GM12878 (cell line): ENCODE measurements at regions of chr4 and their contacts with region 1.

Region 1: DNA sequence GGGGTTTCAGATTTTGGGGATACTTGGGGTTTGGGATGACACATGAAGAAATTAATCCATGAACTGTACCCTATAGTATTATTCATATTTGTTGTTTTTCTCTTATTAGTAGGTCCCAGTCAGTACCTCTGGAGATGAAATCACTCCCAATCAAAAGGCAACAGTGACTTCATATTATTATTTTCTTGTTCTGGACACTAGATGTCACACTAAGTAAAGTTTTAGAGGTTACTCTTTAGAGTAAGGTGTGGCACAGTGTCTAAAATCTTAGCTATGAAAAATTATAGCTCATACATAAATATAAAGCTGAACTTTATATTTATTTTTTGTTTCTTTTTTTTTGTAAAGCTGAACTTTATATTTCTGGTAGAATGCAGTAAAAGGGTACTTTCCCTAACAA is 35.1 kb downstream of the FAM114A1 start:
- DNase-seq: no peak
- ATAC-seq: peak; percentile 95
- H3K4me3 ChIP-seq: no peak overlapping the region
- H3K27ac ChIP-seq: no peak overlapping the region
- H3K4me1 ChIP-seq: no peaks in the 10 kb centered on the region
- H3K27me3 ChIP-seq: no peaks in the 10 kb centered on the region
- CTCF ChIP-seq: peak in 2 of 3 experiments; percentile 23 to 61; a peak in 3 of 6 replicates
- EP300 ChIP-seq: no peak
- POLR2A ChIP-seq: no peak
- RAD21 ChIP-seq: peak; percentile 79

Region 2: DNA sequence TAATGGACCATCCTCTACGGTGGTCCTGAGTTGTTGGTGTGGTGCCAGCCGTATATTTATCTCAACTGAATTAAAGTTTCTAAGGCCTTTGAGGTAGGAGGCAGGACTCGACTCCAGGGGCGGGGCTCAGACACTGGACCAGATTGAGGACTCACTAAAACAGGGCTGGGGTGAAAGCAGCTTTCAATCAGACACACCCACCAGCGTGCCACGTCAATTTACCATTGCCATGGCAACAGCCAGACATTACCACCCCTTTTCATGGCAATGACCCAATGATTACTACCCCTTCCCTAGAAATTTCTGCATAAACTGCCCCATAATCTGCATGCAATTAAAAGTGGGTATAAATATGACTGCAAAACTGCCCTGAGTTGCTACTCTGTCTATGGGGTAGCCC is 91.4 kb before region 1 on chr4:
- CTCF ChIA-PET with region 1: no interaction called
- POLR2A ChIA-PET with region 1: no interaction called
- RAD21 ChIA-PET with region 1: no interaction called
- SMC1A ChIA-PET with region 1: no interaction called
- in situ Hi-C with region 1: no loop called
- intact Hi-C with region 1: no loop called
- DNase-seq: no peak
- ATAC-seq: no peak
- H3K4me3 ChIP-seq: no peak overlapping the region
- H3K27ac ChIP-seq: no peak overlapping the region
- H3K4me1 ChIP-seq: peaks cover 11% of the 10 kb centered on the region
- H3K27me3 ChIP-seq: no peaks in the 10 kb centered on the region
- CTCF ChIP-seq: no peak
- EP300 ChIP-seq: no peak
- POLR2A ChIP-seq: no peak
- RAD21 ChIP-seq: no peak

Region 3: GRCh38 chr4:38837849-38838248 is 64.8 kb before region 1 on chr4:
- CTCF ChIA-PET with region 1: no interaction called
- POLR2A ChIA-PET with region 1: no interaction called
- RAD21 ChIA-PET with region 1: no interaction called
- SMC1A ChIA-PET with region 1: no interaction called
- in situ Hi-C with region 1: no loop called
- intact Hi-C with region 1: no loop called
- DNase-seq: no peak
- ATAC-seq: no peak
- H3K4me3 ChIP-seq: no peak overlapping the region
- H3K27ac ChIP-seq: no peak overlapping the region
- H3K4me1 ChIP-seq: no peaks in the 10 kb centered on the region
- H3K27me3 ChIP-seq: no peaks in the 10 kb centered on the region
- CTCF ChIP-seq: no peak
- EP300 ChIP-seq: no peak
- POLR2A ChIP-seq: no peak
- RAD21 ChIP-seq: no peak

Region 4: GRCh38 chr4:38856524-38857337 is 46.0 kb before region 1 on chr4 and contains the start of gene TLR6:
- CTCF ChIA-PET with region 1: interaction called, 49 read pairs
- POLR2A ChIA-PET with region 1: no interaction called
- RAD21 ChIA-PET with region 1: interaction called, 15 read pairs
- SMC1A ChIA-PET with region 1: interaction called, 12 read pairs
- in situ Hi-C with region 1: no loop called
- intact Hi-C with region 1: no loop called
- DNase-seq: peak; percentile 91
- ATAC-seq: peak; percentile 59
- H3K4me3 ChIP-seq: peak within 1 kb of the TSS; percentile 75
- H3K27ac ChIP-seq: peak within 1 kb of the TSS; percentile 96
- H3K4me1 ChIP-seq: peaks cover 14% of the 10 kb centered on the region
- H3K27me3 ChIP-seq: no peaks in the 10 kb centered on the region
- CTCF ChIP-seq: peak; percentile 62 to 79 (median 77)
- EP300 ChIP-seq: peak in 1 of 2 experiments; percentile 51; a peak in 1 of 4 replicates
- POLR2A ChIP-seq: no peak
- RAD21 ChIP-seq: peak; percentile 88
- polyA plus RNA-seq, gene TLR6: 1.1 to 1.5 TPM

Region 5: DNA sequence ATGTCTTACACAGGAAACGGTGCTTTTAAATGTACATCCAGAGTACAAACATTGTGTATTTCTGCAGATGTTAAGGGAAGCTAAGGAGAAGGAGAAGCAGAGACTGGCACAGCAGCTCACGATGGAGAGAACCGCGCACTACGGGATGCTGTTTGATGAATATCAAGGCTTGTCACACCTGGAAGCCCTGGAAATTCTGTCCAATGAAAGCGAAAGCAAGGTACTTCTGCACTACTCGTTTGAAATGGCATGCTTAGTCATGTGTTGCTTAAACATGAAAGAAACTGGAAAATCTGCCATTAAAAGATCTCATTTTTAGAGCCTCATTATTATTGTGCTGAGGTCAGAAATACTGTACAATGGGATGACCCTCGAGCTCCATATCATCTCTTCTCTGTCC is 12.2 kb after region 1 on chr4:
- CTCF ChIA-PET with region 1: interaction called, 36 read pairs
- POLR2A ChIA-PET with region 1: no interaction called
- RAD21 ChIA-PET with region 1: interaction called, 7 read pairs
- SMC1A ChIA-PET with region 1: interaction called, 16 read pairs
- in situ Hi-C with region 1: no loop called
- intact Hi-C with region 1: no loop called
- DNase-seq: no peak
- ATAC-seq: peak; percentile 82
- H3K4me3 ChIP-seq: no peak overlapping the region
- H3K27ac ChIP-seq: no peak overlapping the region
- H3K4me1 ChIP-seq: peaks cover 3% of the 10 kb centered on the region; the same call in 1 of the 2 replicates
- H3K27me3 ChIP-seq: no peaks in the 10 kb centered on the region
- CTCF ChIP-seq: no peak
- EP300 ChIP-seq: no peak
- POLR2A ChIP-seq: no peak
- RAD21 ChIP-seq: no peak

Region 6: GRCh38 chr4:38993694-38994093 is 91.0 kb after region 1 on chr4:
- CTCF ChIA-PET with region 1: interaction called, 3 read pairs
- POLR2A ChIA-PET with region 1: no interaction called
- RAD21 ChIA-PET with region 1: no interaction called
- SMC1A ChIA-PET with region 1: interaction called, 3 read pairs
- in situ Hi-C with region 1: no loop called
- intact Hi-C with region 1: loop called (anchors 5 kb)
- DNase-seq: no peak
- ATAC-seq: peak; percentile 49; the same call in 1 of the 3 replicates
- H3K4me3 ChIP-seq: no peak overlapping the region
- H3K27ac ChIP-seq: no peak overlapping the region
- H3K4me1 ChIP-seq: peaks cover 5% of the 10 kb centered on the region; the same call in 1 of the 2 replicates
- H3K27me3 ChIP-seq: no peaks in the 10 kb centered on the region
- CTCF ChIP-seq: peak in 2 of 3 experiments; percentile 16 to 19; a peak in 1 of 6 replicates
- EP300 ChIP-seq: no peak
- POLR2A ChIP-seq: no peak
- RAD21 ChIP-seq: peak; percentile 30; the same call in 1 of the 2 replicates

Region 7: DNA sequence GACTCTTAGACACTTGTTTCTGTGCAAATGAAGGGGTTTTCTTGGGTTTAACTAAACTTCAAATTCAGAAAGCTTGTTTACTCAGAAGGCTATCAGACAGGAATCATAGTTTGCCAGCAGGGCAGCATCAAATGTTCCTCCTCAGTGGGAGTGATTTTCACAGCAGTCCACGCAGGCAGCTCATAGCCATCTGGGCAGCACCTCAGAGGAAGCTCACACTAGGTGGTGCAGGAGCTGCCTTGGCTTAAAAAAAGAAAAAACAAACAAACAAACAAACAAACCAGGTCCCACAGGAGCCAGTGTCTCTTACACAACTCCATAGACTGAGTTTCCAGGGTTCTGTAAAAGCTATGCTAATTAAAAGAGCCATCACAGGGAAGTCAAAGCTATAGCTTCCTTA is 148.8 kb after region 1 on chr4:
- CTCF ChIA-PET with region 1: interaction called, 13 read pairs
- POLR2A ChIA-PET with region 1: no interaction called
- RAD21 ChIA-PET with region 1: interaction called, 32 read pairs
- SMC1A ChIA-PET with region 1: interaction called, 55 read pairs
- in situ Hi-C with region 1: no loop called
- intact Hi-C with region 1: no loop called
- DNase-seq: no peak
- ATAC-seq: no peak
- H3K4me3 ChIP-seq: no peak overlapping the region
- H3K27ac ChIP-seq: no peak overlapping the region
- H3K4me1 ChIP-seq: peaks cover 8% of the 10 kb centered on the region
- H3K27me3 ChIP-seq: no peaks in the 10 kb centered on the region
- CTCF ChIP-seq: no peak
- EP300 ChIP-seq: no peak
- POLR2A ChIP-seq: no peak
- RAD21 ChIP-seq: no peak

Region 8: GRCh38 chr4:39181905-39182638 is 279.4 kb after region 1 on chr4 and contains the start of gene WDR19:
- CTCF ChIA-PET with region 1: interaction called, 17 read pairs
- POLR2A ChIA-PET with region 1: interaction called, 3 read pairs
- RAD21 ChIA-PET with region 1: interaction called, 7 read pairs
- SMC1A ChIA-PET with region 1: interaction called, 7 read pairs
- in situ Hi-C with region 1: no loop called
- intact Hi-C with region 1: no loop called
- DNase-seq: peak; percentile 98
- ATAC-seq: peak; percentile 99
- H3K4me3 ChIP-seq: peak within 1 kb of the TSS; percentile 88
- H3K27ac ChIP-seq: peak within 1 kb of the TSS; percentile 72
- H3K4me1 ChIP-seq: peaks cover 3% of the 10 kb centered on the region; the same call in 1 of the 2 replicates
- H3K27me3 ChIP-seq: no peaks in the 10 kb centered on the region
- CTCF ChIP-seq: peak; percentile 48 to 59 (median 56)
- EP300 ChIP-seq: 0 out of 4 replicates have a peak, but pooled peaks of 1 of the 2 experiments have one; percentile 16
- POLR2A ChIP-seq: peak; percentile 66
- RAD21 ChIP-seq: peak; percentile 52
- polyA plus RNA-seq, gene WDR19: 3.5 to 6.7 TPM

Region 9: DNA sequence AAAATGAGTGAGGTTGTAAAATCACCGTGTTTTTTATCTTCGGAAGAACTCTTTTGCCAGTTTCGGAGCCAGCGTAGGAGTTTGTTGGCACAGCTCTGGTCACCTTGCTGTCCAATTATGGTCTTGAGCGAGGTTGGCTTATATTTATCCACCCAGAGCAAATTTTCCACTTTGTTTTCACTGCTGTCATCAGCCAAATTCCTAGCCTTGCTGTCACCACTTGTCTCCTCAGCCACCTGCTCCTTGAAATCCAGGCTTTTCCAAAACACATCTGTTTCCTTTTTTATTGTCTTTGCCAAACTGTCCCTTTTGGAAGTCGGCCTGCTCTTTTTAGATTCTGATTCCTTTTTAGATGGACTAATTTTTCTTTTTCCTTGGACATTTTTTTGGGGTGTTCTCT is 405.9 kb after region 1 on chr4:
- CTCF ChIA-PET with region 1: no interaction called
- POLR2A ChIA-PET with region 1: no interaction called
- RAD21 ChIA-PET with region 1: no interaction called
- SMC1A ChIA-PET with region 1: no interaction called
- in situ Hi-C with region 1: no loop called
- intact Hi-C with region 1: no loop called
- DNase-seq: no peak
- ATAC-seq: no peak
- H3K4me3 ChIP-seq: no peak overlapping the region
- H3K27ac ChIP-seq: no peak overlapping the region
- H3K4me1 ChIP-seq: no peaks in the 10 kb centered on the region
- H3K27me3 ChIP-seq: no peaks in the 10 kb centered on the region
- CTCF ChIP-seq: no peak
- EP300 ChIP-seq: no peak
- POLR2A ChIP-seq: no peak
- RAD21 ChIP-seq: no peak

Region 10: GRCh38 chr4:39458505-39459300 is 556.0 kb after region 1 on chr4 and contains the starts of genes LIAS and RPL9:
- CTCF ChIA-PET with region 1: interaction called, 4 read pairs
- POLR2A ChIA-PET with region 1: no interaction called
- RAD21 ChIA-PET with region 1: interaction called, 3 read pairs
- SMC1A ChIA-PET with region 1: interaction called, 6 read pairs
- in situ Hi-C with region 1: no loop called
- intact Hi-C with region 1: loop called (anchors 5 kb)
- DNase-seq: peak; percentile 99
- ATAC-seq: peak; percentile 89
- H3K4me3 ChIP-seq: peak within 1 kb of the TSS; percentile 94
- H3K27ac ChIP-seq: peak within 1 kb of the TSS; percentile 92
- H3K4me1 ChIP-seq: peaks cover 2% of the 10 kb centered on the region; the same call in 1 of the 2 replicates
- H3K27me3 ChIP-seq: no peaks in the 10 kb centered on the region
- CTCF ChIP-seq: no peak
- EP300 ChIP-seq: 0 out of 4 replicates have a peak, but pooled peaks of 1 of the 2 experiments have one; percentile 22
- POLR2A ChIP-seq: peak; percentile 99
- RAD21 ChIP-seq: no peak
- polyA plus RNA-seq, gene LIAS: 19.9 to 22.1 TPM
- polyA plus RNA-seq, gene RPL9: 3,033 to 4,444 TPM

Region 11: GRCh38 chr4:40607221-40607620 is 1704.5 kb after region 1 on chr4:
- CTCF ChIA-PET with region 1: no interaction called
- POLR2A ChIA-PET with region 1: no interaction called
- RAD21 ChIA-PET with region 1: no interaction called
- SMC1A ChIA-PET with region 1: no interaction called
- in situ Hi-C with region 1: no loop called
- intact Hi-C with region 1: no loop called
- DNase-seq: no peak
- ATAC-seq: no peak
- H3K4me3 ChIP-seq: no peak overlapping the region
- H3K27ac ChIP-seq: no peak overlapping the region
- H3K4me1 ChIP-seq: 0 out of 2 replicates have a peak, but pooled peaks cover 7% of the 10 kb centered on the region
- H3K27me3 ChIP-seq: no peaks in the 10 kb centered on the region
- CTCF ChIP-seq: no peak
- EP300 ChIP-seq: no peak
- POLR2A ChIP-seq: no peak
- RAD21 ChIP-seq: no peak